ENCODE measurements at regions of chr11 and their contacts with region 1.

Region 1: GRCh38 chr11:47373876-47374720 is 4.2 kb downstream of the SPI1 start:
- DNase-seq: peak; percentile 85
- H3K4me3 ChIP-seq: no peak overlapping the region
- H3K27ac ChIP-seq: no peak overlapping the region
- H3K4me1 ChIP-seq: no peaks in the 10 kb centered on the region
- H3K27me3 ChIP-seq: no peaks in the 10 kb centered on the region
- CTCF ChIP-seq: peak; percentile 91 to 96 (median 94)
- EP300 ChIP-seq: no peak
- POLR2A ChIP-seq: no peak

Region 2: GRCh38 chr11:47269002-47269828 is 104.9 kb before region 1 on chr11:
- in situ Hi-C with region 1: no loop called
- intact Hi-C with region 1: no loop called
- DNase-seq: peak; percentile 91
- H3K4me3 ChIP-seq: peak overlapping the region; percentile 63 to 95 (median 88)
- H3K27ac ChIP-seq: peak overlapping the region; percentile 94 to 98 (median 97)
- H3K4me1 ChIP-seq: peaks cover 26 to 51% (median 41%) of the 10 kb centered on the region in 4 donors
- H3K27me3 ChIP-seq: no peaks in the 10 kb centered on the region
- CTCF ChIP-seq: peak in 4 of 5 experiments; percentile 24 to 60 (median 42)
- EP300 ChIP-seq: no peak
- POLR2A ChIP-seq: peak; percentile 62

Region 3: GRCh38 chr11:47858169-47858543 is 484.1 kb after region 1 on chr11:
- in situ Hi-C with region 1: no loop called
- intact Hi-C with region 1: loop called (anchors 10 kb)
- DNase-seq: no peak
- H3K4me3 ChIP-seq: no peak overlapping the region
- H3K27ac ChIP-seq: peak overlapping the region in 3 of 4 donors; percentile 4 to 12 (median 11)
- H3K4me1 ChIP-seq: peaks cover 0 to 15% (median 2%) of the 10 kb centered on the region in 4 donors
- H3K27me3 ChIP-seq: no peaks in the 10 kb centered on the region
- CTCF ChIP-seq: no peak
- EP300 ChIP-seq: no peak
- POLR2A ChIP-seq: no peak

Measured in transverse colon (tissue), 4 donors.